B cell (primary cell): ENCODE measurements at regions of chr19 and their contacts with region 1.

Region 1: GRCh38 chr19:48271531-48272151 is 1.8 kb downstream of the ZNF114 start:
- DNase-seq: peak; percentile 53
- ATAC-seq: peak; percentile 55
- H3K4me3 ChIP-seq: peak overlapping the region; percentile 55 to 82 (median 74)
- H3K4me3 Mint-ChIP-seq: peak overlapping the region; percentile 97
- H3K27ac ChIP-seq: no peak overlapping the region
- H3K27ac Mint-ChIP-seq: peak overlapping the region; percentile 87
- H3K4me1 ChIP-seq: peaks cover 3 to 15% of the 10 kb centered on the region in 2 donors
- H3K4me1 Mint-ChIP-seq: peaks cover 13% of the 10 kb centered on the region
- H3K27me3 ChIP-seq: peaks cover 0 to 2% (median 0%) of the 10 kb centered on the region in 4 experiments
- H3K27me3 Mint-ChIP-seq: peaks cover 3% of the 10 kb centered on the region
- CTCF ChIP-seq: no peak

Region 2: DNA sequence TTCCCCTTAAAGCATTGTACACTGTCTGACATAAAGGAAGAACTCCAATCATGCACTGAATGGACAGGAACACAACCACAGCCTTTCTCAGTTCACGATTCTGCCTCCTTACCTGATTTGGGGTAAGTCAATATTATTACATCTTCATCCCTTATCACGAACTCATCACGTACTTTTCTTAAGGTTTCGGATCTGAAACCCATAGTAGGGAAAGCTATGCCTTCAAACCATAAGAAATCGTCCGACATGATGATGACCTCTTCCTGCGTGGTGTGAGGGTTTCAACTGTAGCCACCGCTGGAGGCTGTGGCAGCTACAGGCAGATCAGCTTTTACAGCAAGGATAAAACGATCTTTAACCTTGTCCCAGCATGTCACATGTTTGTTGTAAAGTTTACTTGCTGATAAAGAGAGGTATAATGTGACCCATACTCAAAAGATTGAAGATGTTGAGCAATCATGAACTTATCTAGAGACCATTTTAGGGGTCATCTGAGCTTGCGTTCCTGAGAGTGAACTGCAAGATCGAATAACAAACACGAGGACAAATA is 385.6 kb before region 1 on chr19 and contains the start of gene SULT2A1:
- CTCF ChIA-PET with region 1: no interaction called
- POLR2A ChIA-PET with region 1: no interaction called
- intact Hi-C with region 1: no loop called
- DNase-seq: no peak
- ATAC-seq: no peak
- H3K4me3 ChIP-seq: no peak within 1 kb of the TSS
- H3K4me3 Mint-ChIP-seq: no peak within 1 kb of the TSS
- H3K27ac ChIP-seq: no peak within 1 kb of the TSS
- H3K27ac Mint-ChIP-seq: no peak within 1 kb of the TSS
- H3K4me1 ChIP-seq: no peaks in the 10 kb centered on the region
- H3K4me1 Mint-ChIP-seq: no peaks in the 10 kb centered on the region
- H3K27me3 ChIP-seq: peaks cover 0 to 5% (median 2%) of the 10 kb centered on the region in 4 experiments
- H3K27me3 Mint-ChIP-seq: peaks cover 14% of the 10 kb centered on the region
- CTCF ChIP-seq: no peak
- total RNA-seq, gene SULT2A1: not detected in 2 replicates

Region 3: DNA sequence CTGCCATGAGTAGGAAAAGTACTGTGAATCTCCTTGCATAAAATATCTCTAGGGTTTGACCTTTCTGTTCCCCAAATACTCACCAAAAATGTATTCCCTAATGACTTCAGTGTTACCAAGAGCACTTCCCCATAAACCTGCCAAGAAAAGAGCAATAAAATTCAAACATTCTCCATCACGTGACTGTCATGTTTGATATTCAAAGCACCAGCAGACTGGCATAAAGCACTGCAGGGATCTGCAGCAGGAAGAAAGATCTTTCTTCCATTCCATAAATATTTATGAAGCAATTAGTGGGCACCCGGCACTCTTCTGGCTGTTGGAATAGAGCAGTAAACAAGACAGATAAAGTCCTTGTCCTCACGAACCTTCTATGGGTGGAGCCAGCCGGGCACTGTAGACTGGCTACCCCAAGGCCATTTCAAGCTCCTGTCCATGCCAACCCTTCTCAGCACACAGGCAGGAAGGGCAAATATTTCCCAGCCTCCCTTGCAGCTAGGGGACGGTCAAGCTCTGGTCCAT is 181.3 kb before region 1 on chr19:
- CTCF ChIA-PET with region 1: no interaction called
- POLR2A ChIA-PET with region 1: no interaction called
- intact Hi-C with region 1: no loop called
- DNase-seq: no peak
- ATAC-seq: no peak
- H3K4me3 ChIP-seq: no peak overlapping the region
- H3K4me3 Mint-ChIP-seq: no peak overlapping the region
- H3K27ac ChIP-seq: no peak overlapping the region
- H3K27ac Mint-ChIP-seq: no peak overlapping the region
- H3K4me1 ChIP-seq: no peaks in the 10 kb centered on the region
- H3K4me1 Mint-ChIP-seq: peaks cover 2% of the 10 kb centered on the region
- H3K27me3 ChIP-seq: no peaks in the 10 kb centered on the region
- H3K27me3 Mint-ChIP-seq: peaks cover 4% of the 10 kb centered on the region
- CTCF ChIP-seq: no peak

Region 4: GRCh38 chr19:48239580-48240141 is 32.0 kb before region 1 on chr19:
- CTCF ChIA-PET with region 1: no interaction called
- POLR2A ChIA-PET with region 1: no interaction called
- intact Hi-C with region 1: no loop called
- DNase-seq: no peak
- ATAC-seq: no peak
- H3K4me3 ChIP-seq: no peak overlapping the region
- H3K4me3 Mint-ChIP-seq: no peak overlapping the region
- H3K27ac ChIP-seq: peak overlapping the region in 1 of 2 donors; percentile 4
- H3K27ac Mint-ChIP-seq: no peak overlapping the region
- H3K4me1 ChIP-seq: peaks cover 14 to 15% of the 10 kb centered on the region in 2 donors
- H3K4me1 Mint-ChIP-seq: peaks cover 24% of the 10 kb centered on the region
- H3K27me3 ChIP-seq: no peaks in the 10 kb centered on the region
- H3K27me3 Mint-ChIP-seq: no peaks in the 10 kb centered on the region
- CTCF ChIP-seq: no peak

Region 5: DNA sequence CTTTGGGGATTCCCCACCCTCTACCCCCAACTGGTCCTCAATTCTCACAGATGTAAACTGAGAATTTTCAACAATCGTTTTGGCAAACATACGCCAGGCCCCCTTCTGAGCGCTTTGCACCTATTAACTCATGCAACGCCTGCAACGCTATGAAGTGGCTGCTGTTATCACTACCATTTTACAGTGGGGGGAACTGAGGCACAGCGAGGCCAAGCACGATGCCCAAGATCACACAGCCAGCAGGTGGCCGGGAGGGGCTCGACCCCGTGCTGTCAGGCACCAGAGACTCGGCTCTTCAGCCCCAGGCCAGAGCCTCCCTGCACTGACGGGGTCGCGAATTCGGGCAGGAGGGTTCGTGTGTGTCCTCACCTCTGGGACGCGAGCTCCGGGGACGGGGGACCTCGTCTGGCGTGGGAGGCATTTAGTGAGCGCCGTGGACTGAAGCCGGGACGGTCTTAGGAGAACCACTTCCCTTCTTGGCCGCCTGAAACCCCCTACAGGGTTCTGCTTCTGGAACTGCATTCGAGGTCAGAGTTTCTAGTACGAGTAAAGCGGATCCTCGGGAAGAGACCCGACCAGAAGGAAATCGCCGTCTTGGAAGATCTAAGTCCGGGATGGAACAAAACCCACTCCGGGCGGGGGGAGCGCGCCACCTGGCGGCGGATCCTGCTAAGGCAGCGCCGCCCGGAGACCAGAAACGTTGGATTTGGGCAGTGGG is 19.3 kb after region 1 on chr19:
- CTCF ChIA-PET with region 1: interaction called, 52 read pairs
- POLR2A ChIA-PET with region 1: no interaction called
- intact Hi-C with region 1: loop called (anchors 1 kb)
- DNase-seq: peak; percentile 73
- ATAC-seq: peak; percentile 77
- H3K4me3 ChIP-seq: peak overlapping the region; percentile 0 to 71 (median 56)
- H3K4me3 Mint-ChIP-seq: peak overlapping the region; percentile 85
- H3K27ac ChIP-seq: no peak overlapping the region
- H3K27ac Mint-ChIP-seq: no peak overlapping the region
- H3K4me1 ChIP-seq: peaks cover 4 to 13% of the 10 kb centered on the region in 2 donors
- H3K4me1 Mint-ChIP-seq: peaks cover 10% of the 10 kb centered on the region
- H3K27me3 ChIP-seq: no peaks in the 10 kb centered on the region
- H3K27me3 Mint-ChIP-seq: no peaks in the 10 kb centered on the region
- CTCF ChIP-seq: peak; percentile 90

Region 6: DNA sequence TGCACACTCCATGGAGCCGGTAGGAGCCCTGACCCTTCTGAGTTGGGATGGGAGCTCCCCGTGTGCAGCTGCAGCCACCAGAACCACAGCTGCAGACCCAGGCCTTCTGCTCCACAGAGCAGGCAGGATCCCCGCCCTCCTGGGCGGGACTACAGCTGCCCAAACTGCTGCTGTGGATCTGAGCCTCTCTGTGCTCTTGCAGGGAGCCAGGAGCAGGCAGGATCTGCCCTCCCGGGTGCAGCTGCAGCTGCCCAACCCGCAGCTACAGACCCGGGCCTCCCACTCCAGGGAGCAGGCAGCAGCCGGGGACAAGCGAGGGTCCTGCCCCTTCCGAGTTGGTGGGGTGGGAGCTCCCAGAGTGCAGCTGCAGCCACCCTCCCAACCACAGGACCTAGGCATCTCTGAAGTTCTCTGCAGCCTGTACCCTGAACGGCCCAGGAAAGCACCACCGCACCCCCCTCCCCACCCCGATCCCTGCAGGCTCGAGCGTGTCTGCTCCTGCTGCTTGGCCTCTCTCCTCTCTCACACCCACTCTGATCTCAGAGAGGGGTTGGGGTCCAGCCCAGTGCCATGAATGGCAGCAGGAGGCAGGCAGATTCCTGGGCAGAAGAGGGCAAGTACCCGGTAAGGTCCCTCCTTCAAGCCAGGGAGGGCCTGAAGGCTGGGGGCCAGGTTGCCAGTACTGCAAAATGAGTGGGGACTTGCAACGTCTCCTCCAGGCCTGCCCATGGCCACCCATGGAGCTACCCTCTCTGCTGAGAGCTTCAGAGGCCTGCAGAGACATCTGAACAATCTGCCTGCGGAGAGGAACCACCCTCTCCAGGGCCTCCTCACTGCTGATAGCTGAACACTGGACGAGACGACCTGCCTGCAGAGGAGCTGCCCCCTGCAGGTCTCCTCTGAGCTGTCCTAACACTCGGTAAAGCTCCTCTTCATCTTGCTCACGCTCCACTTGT is 37.3 kb after region 1 on chr19:
- CTCF ChIA-PET with region 1: no interaction called
- POLR2A ChIA-PET with region 1: no interaction called
- intact Hi-C with region 1: no loop called
- DNase-seq: no peak
- ATAC-seq: no peak
- H3K4me3 ChIP-seq: no peak overlapping the region
- H3K4me3 Mint-ChIP-seq: no peak overlapping the region
- H3K27ac ChIP-seq: no peak overlapping the region
- H3K27ac Mint-ChIP-seq: no peak overlapping the region
- H3K4me1 ChIP-seq: no peaks in the 10 kb centered on the region
- H3K4me1 Mint-ChIP-seq: no peaks in the 10 kb centered on the region
- H3K27me3 ChIP-seq: no peaks in the 10 kb centered on the region
- H3K27me3 Mint-ChIP-seq: peaks cover 13% of the 10 kb centered on the region
- CTCF ChIP-seq: no peak